GM12878 (cell line): ENCODE measurements at regions of chr17 and their contacts with region 1.

Region 1: GRCh38 chr17:70208825-70209555 is 39.7 kb downstream of the KCNJ2 start:
- DNase-seq: peak; percentile 28
- ATAC-seq: peak; percentile 86
- H3K4me3 ChIP-seq: no peak overlapping the region
- H3K27ac ChIP-seq: no peak overlapping the region
- H3K4me1 ChIP-seq: no peaks in the 10 kb centered on the region; the same call in 1 of the 2 replicates
- H3K27me3 ChIP-seq: no peaks in the 10 kb centered on the region
- CTCF ChIP-seq: no peak
- EP300 ChIP-seq: peak; percentile 68 to 72; a peak in 2 of 4 replicates
- POLR2A ChIP-seq: no peak
- RAD21 ChIP-seq: no peak

Region 2: GRCh38 chr17:70242781-70243437 is 33.9 kb after region 1 on chr17:
- CTCF ChIA-PET with region 1: interaction called, 9 read pairs
- POLR2A ChIA-PET with region 1: interaction called, 8 read pairs
- RAD21 ChIA-PET with region 1: interaction called, 60 read pairs
- SMC1A ChIA-PET with region 1: interaction called, 83 read pairs
- in situ Hi-C with region 1: no loop called
- intact Hi-C with region 1: loop called (anchors 5 kb)
- DNase-seq: no peak
- ATAC-seq: peak; percentile 90
- H3K4me3 ChIP-seq: no peak overlapping the region
- H3K27ac ChIP-seq: no peak overlapping the region
- H3K4me1 ChIP-seq: no peaks in the 10 kb centered on the region
- H3K27me3 ChIP-seq: no peaks in the 10 kb centered on the region
- CTCF ChIP-seq: no peak
- EP300 ChIP-seq: no peak
- POLR2A ChIP-seq: no peak
- RAD21 ChIP-seq: no peak

Region 3: GRCh38 chr17:70344386-70345060 is 135.5 kb after region 1 on chr17:
- CTCF ChIA-PET with region 1: interaction called, 4 read pairs
- POLR2A ChIA-PET with region 1: no interaction called
- RAD21 ChIA-PET with region 1: interaction called, 11 read pairs
- SMC1A ChIA-PET with region 1: interaction called, 14 read pairs
- in situ Hi-C with region 1: no loop called
- intact Hi-C with region 1: no loop called
- DNase-seq: no peak
- ATAC-seq: peak; percentile 74
- H3K4me3 ChIP-seq: no peak overlapping the region
- H3K27ac ChIP-seq: no peak overlapping the region
- H3K4me1 ChIP-seq: no peaks in the 10 kb centered on the region
- H3K27me3 ChIP-seq: no peaks in the 10 kb centered on the region
- CTCF ChIP-seq: no peak
- EP300 ChIP-seq: no peak
- POLR2A ChIP-seq: no peak
- RAD21 ChIP-seq: no peak

Region 4: GRCh38 chr17:70365091-70365583 is 156.1 kb after region 1 on chr17:
- CTCF ChIA-PET with region 1: no interaction called
- POLR2A ChIA-PET with region 1: interaction called, 4 read pairs
- RAD21 ChIA-PET with region 1: interaction called, 4 read pairs
- SMC1A ChIA-PET with region 1: interaction called, 10 read pairs
- in situ Hi-C with region 1: no loop called
- intact Hi-C with region 1: no loop called
- DNase-seq: peak; percentile 71
- ATAC-seq: peak; percentile 99
- H3K4me3 ChIP-seq: no peak overlapping the region
- H3K27ac ChIP-seq: no peak overlapping the region; the same call in 1 of the 2 replicates
- H3K4me1 ChIP-seq: no peaks in the 10 kb centered on the region
- H3K27me3 ChIP-seq: no peaks in the 10 kb centered on the region
- CTCF ChIP-seq: no peak
- EP300 ChIP-seq: peak in 1 of 2 experiments; percentile 95; a peak in 2 of 4 replicates
- POLR2A ChIP-seq: no peak
- RAD21 ChIP-seq: no peak; the same call in 1 of the 2 replicates